Astrocyte of the cerebellum (primary cell): ENCODE measurements at regions of chr2 and their contacts with region 1.

Region 1: DNA sequence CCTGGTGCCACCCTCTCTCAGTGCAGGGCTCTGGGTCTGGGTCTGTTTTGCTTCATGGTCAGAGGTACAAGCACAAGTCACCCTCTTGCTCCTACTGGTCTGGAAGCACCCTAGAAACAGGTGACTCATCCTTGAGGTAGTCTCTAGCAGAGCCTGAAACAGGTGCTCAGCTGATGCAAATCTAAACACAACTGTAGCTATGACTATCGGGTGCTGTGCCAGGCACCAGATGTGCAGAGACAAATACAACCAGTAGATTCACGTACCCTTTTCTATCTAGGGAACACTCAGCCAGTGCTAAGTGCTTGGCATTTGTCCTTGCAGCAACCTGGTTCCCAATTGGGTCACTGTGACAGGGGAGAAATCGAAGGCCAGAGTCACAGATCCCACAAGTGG is 140.9 kb upstream of the MYCN start:
- DNase-seq: no peak
- H3K4me3 ChIP-seq: no peak overlapping the region
- CTCF ChIP-seq: no peak

Region 2: GRCh38 chr2:15693926-15694588 is 105.4 kb before region 1 on chr2:
- in situ Hi-C with region 1: loop called (anchors 5 kb)
- DNase-seq: no peak
- H3K4me3 ChIP-seq: no peak overlapping the region
- CTCF ChIP-seq: no peak

Region 3: DNA sequence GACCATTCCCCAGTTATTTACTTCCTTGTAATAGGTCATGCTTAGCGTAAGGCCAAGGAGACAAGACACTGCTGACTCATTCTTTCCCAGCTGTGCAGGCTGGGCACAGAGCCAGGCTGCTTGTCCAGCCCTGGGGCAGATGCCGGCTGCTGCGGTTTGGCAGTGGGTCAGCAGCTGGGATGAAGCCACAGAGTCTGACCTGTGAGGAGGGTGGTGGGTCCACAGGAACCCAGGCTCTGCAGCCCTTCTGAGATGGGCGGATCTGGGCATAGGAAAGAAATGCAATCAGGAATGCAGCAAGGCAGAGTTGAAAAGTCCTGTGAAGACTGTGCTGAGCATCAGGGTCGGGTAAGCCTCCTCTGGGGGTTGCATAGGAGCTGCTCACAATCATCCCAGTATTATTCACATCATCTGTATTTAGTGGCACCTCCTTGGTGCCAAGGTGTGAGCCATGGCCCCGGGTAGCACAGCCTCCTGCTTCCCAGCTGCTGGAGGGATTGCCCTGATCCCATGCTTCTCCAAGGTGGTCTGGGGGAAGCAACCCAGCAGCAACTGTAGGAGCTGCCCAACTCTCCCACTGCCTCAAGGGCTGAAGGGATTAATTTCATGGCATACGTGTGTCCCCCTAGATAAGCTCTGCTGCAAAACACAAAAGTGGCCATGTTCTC is 68.8 kb before region 1 on chr2:
- in situ Hi-C with region 1: no loop called
- DNase-seq: peak; percentile 89
- H3K4me3 ChIP-seq: no peak overlapping the region
- CTCF ChIP-seq: no peak